Caco-2 (cell line): ENCODE measurements at regions of chr11 and their contacts with region 1.

Region 1: GRCh38 chr11:58579192-58580129 is 598 bp downstream of the ZFP91 start:
- DNase-seq: peak; percentile 92 to 94
- H3K4me3 ChIP-seq: peak overlapping the region; percentile 78
- H3K4me3 Mint-ChIP-seq: peak overlapping the region; percentile 99
- H3K27ac Mint-ChIP-seq: peak overlapping the region; percentile 99
- H3K4me1 ChIP-seq: peaks cover 2% of the 10 kb centered on the region; the same call in 1 of the 2 replicates
- H3K4me1 Mint-ChIP-seq: no peaks in the 10 kb centered on the region
- H3K27me3 ChIP-seq: no peaks in the 10 kb centered on the region
- H3K27me3 Mint-ChIP-seq: no peaks in the 10 kb centered on the region
- CTCF ChIP-seq: peak; percentile 83 to 89

Region 2: GRCh38 chr11:57778318-57779037 is 801.0 kb before region 1 on chr11:
- CTCF ChIA-PET with region 1: no interaction called
- POLR2A ChIA-PET with region 1: no interaction called
- intact Hi-C with region 1: loop called (anchors 5 kb)
- DNase-seq: peak; percentile 90 to 94
- H3K4me3 ChIP-seq: peak overlapping the region; percentile 23
- H3K4me3 Mint-ChIP-seq: peak overlapping the region; percentile 65
- H3K27ac Mint-ChIP-seq: peak overlapping the region; percentile 94
- H3K4me1 ChIP-seq: peaks cover 87% of the 10 kb centered on the region
- H3K4me1 Mint-ChIP-seq: peaks cover 80% of the 10 kb centered on the region
- H3K27me3 ChIP-seq: no peaks in the 10 kb centered on the region
- H3K27me3 Mint-ChIP-seq: no peaks in the 10 kb centered on the region
- CTCF ChIP-seq: no peak

Region 3: GRCh38 chr11:58617976-58618557 is 38.6 kb after region 1 on chr11:
- CTCF ChIA-PET with region 1: no interaction called
- POLR2A ChIA-PET with region 1: no interaction called
- intact Hi-C with region 1: loop called (anchors 1 kb)
- DNase-seq: peak in 1 of 2 experiments; percentile 17
- H3K4me3 ChIP-seq: no peak overlapping the region
- H3K4me3 Mint-ChIP-seq: no peak overlapping the region
- H3K27ac Mint-ChIP-seq: no peak overlapping the region
- H3K4me1 ChIP-seq: no peaks in the 10 kb centered on the region
- H3K4me1 Mint-ChIP-seq: no peaks in the 10 kb centered on the region
- H3K27me3 ChIP-seq: no peaks in the 10 kb centered on the region
- H3K27me3 Mint-ChIP-seq: no peaks in the 10 kb centered on the region
- CTCF ChIP-seq: peak in 1 of 2 experiments; percentile 60

Region 4: GRCh38 chr11:58675334-58676155 is 96.1 kb after region 1 on chr11:
- CTCF ChIA-PET with region 1: no interaction called
- POLR2A ChIA-PET with region 1: no interaction called
- intact Hi-C with region 1: loop called (anchors 1 kb)
- DNase-seq: peak; percentile 78 to 85
- H3K4me3 ChIP-seq: no peak overlapping the region
- H3K4me3 Mint-ChIP-seq: no peak overlapping the region
- H3K27ac Mint-ChIP-seq: no peak overlapping the region
- H3K4me1 ChIP-seq: no peaks in the 10 kb centered on the region
- H3K4me1 Mint-ChIP-seq: no peaks in the 10 kb centered on the region
- H3K27me3 ChIP-seq: no peaks in the 10 kb centered on the region
- H3K27me3 Mint-ChIP-seq: no peaks in the 10 kb centered on the region
- CTCF ChIP-seq: peak; percentile 92 to 98

Region 5: GRCh38 chr11:58788355-58789023 is 209.0 kb after region 1 on chr11:
- CTCF ChIA-PET with region 1: interaction called, 8 read pairs
- POLR2A ChIA-PET with region 1: no interaction called
- intact Hi-C with region 1: loop called (anchors 1 kb)
- DNase-seq: peak; percentile 69 to 76
- H3K4me3 ChIP-seq: no peak overlapping the region
- H3K4me3 Mint-ChIP-seq: no peak overlapping the region
- H3K27ac Mint-ChIP-seq: no peak overlapping the region
- H3K4me1 ChIP-seq: peaks cover 40% of the 10 kb centered on the region
- H3K4me1 Mint-ChIP-seq: peaks cover 24% of the 10 kb centered on the region
- H3K27me3 ChIP-seq: no peaks in the 10 kb centered on the region
- H3K27me3 Mint-ChIP-seq: no peaks in the 10 kb centered on the region
- CTCF ChIP-seq: peak; percentile 77 to 89

Region 6: DNA sequence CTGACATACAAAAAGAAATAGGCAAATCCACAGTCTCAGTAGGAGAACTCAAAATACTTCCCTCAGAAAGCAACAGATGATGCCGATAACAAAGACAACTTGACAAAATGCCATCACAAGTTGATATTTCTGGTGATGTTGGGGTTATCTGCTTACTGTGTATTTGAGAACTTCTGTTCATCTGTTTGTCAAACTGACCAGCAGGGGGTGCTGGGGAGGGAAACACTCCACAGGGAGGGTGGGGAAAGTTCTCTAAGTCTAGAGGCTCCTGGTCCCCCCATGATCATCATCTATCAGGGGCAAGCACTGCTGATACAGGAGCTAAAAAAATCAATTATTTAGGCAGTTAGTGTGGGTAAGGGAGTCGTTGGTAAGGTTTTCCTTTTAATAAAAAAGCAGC is 379.0 kb after region 1 on chr11:
- CTCF ChIA-PET with region 1: no interaction called
- POLR2A ChIA-PET with region 1: no interaction called
- intact Hi-C with region 1: no loop called
- DNase-seq: peak in 1 of 2 experiments; percentile 48
- H3K4me3 ChIP-seq: no peak overlapping the region
- H3K4me3 Mint-ChIP-seq: no peak overlapping the region
- H3K27ac Mint-ChIP-seq: no peak overlapping the region
- H3K4me1 ChIP-seq: no peaks in the 10 kb centered on the region
- H3K4me1 Mint-ChIP-seq: no peaks in the 10 kb centered on the region
- H3K27me3 ChIP-seq: no peaks in the 10 kb centered on the region
- H3K27me3 Mint-ChIP-seq: peaks cover 3% of the 10 kb centered on the region
- CTCF ChIP-seq: peak; percentile 17 to 36

Region 7: DNA sequence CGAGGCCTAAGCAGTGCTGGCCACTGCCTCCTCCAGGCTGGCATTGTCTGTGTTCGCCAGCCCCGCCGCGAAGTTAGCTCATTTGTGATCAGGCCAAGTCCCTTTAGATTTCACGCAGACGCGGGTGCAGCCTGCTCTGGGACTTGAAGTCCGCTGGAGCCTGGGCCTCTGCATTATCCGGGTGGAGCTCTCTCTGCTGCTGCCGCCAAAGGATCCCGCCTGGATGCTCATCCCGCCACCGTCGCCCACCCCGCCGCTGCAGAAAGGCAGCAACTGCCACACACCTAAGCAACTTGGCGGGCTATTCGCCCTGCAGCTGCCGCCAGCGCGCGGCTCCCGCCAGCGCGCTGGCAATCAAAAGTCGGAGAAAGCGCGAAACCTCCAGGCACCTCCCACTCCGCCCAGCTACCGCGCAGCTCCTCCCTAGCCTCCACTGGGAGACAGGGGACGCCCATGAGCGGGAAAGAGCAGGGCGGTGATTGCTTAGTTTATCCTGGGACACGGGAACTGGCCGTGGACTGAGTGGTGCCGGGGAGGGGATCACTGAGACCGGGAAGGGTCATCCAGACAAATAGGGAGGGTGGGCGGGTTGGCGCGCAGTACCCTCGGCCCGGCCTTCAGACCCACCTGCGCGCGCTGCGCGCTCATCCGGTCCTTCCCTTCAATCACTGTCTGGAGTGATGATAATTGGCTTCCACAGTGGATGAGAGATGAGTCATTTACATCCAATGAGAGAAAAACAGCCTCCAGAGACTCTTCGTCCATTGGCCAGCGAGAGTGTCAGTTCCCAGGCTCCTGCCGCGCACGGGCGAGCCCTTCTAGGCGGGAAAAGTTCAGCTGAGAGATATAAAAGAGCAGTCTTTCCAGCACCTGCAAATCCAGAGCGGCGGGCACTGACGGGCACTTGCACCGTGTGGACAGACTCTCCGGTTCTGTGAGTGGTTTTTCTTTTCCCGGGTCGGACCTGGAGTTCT is 527.2 kb after region 1 on chr11 and contains the start of gene FAM111B:
- CTCF ChIA-PET with region 1: interaction called, 3 read pairs
- POLR2A ChIA-PET with region 1: no interaction called
- intact Hi-C with region 1: loop called (anchors 2 kb)
- DNase-seq: peak; percentile 94 to 97
- H3K4me3 ChIP-seq: peak within 1 kb of the TSS; percentile 46
- H3K4me3 Mint-ChIP-seq: peak within 1 kb of the TSS; percentile 99
- H3K27ac Mint-ChIP-seq: peak within 1 kb of the TSS; percentile 97
- H3K4me1 ChIP-seq: peaks cover 21% of the 10 kb centered on the region
- H3K4me1 Mint-ChIP-seq: peaks cover 52% of the 10 kb centered on the region
- H3K27me3 ChIP-seq: no peaks in the 10 kb centered on the region
- H3K27me3 Mint-ChIP-seq: no peaks in the 10 kb centered on the region
- CTCF ChIP-seq: peak in 1 of 2 experiments; percentile 35
- total RNA-seq, gene FAM111B: 49.3 and 55.8 TPM in 2 replicates

Region 8: GRCh38 chr11:59158206-59159068 is 579.0 kb after region 1 on chr11:
- CTCF ChIA-PET with region 1: interaction called, 4 read pairs
- POLR2A ChIA-PET with region 1: no interaction called
- intact Hi-C with region 1: loop called (anchors 5 kb)
- DNase-seq: peak; percentile 68 to 78
- H3K4me3 ChIP-seq: no peak overlapping the region
- H3K4me3 Mint-ChIP-seq: no peak overlapping the region
- H3K27ac Mint-ChIP-seq: no peak overlapping the region
- H3K4me1 ChIP-seq: peaks cover 16% of the 10 kb centered on the region
- H3K4me1 Mint-ChIP-seq: peaks cover 16% of the 10 kb centered on the region
- H3K27me3 ChIP-seq: no peaks in the 10 kb centered on the region
- H3K27me3 Mint-ChIP-seq: peaks cover 10% of the 10 kb centered on the region
- CTCF ChIP-seq: peak; percentile 80 to 84